Activated CD4-positive, alpha-beta T cell treated with anti-CD3 and anti-CD28 coated beads, Interleukin-2, amount 10 ng/mL, durations not matched to agents 24 days and 14 days (primary cell): ENCODE measurements at regions of chr2 and their contacts with region 1.

Region 1: DNA sequence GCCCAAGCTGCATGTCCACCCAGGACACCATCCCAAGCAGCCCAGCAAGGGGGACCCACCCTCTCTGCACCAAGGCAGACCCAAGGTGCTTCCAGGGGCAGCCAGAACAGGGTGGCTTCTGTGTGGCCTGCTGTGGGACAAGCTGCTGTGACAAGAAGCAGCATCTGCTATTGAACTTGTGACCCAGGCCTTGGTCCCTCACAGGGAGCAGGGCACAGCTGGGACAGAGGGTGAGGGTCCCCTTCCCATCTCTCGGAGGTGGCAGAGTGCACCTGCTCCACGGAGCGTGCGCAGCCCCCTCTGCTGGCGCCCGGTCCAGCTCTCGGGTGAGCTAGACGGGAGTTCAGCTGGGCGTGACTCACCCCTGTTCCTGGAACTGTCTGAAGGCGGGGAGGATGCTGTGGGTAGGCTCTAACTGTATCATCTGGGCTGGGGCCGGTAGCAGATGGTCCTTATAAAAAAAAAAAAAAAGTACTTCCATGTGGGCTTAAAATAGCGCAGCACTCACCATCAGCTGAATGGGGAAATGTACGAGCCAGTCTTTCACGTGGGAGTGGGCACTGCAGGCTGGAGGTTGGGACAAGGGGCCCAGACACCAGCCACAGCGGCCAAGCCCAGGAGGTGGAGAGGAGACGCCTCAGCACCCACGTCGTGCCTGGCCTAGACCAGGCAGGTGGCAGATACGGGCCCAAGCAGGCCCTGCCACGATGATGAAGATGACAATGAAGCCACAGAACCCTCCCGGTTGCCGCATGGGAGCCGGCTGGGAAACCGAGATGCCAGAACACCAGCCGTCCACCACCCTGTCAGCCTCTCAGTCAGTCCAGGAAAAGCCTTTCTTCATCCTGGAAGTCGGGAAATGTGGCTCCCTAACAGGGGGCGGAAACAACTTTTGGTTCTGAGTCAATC is 136.8 kb upstream of the ID2 start:
- DNase-seq: peak; percentile 95
- H3K4me3 Mint-ChIP-seq: peak overlapping the region; percentile 64
- H3K27ac Mint-ChIP-seq: peak overlapping the region; percentile 99
- H3K4me1 Mint-ChIP-seq: peaks cover 80% of the 10 kb centered on the region
- H3K27me3 Mint-ChIP-seq: no peaks in the 10 kb centered on the region

Region 2: GRCh38 chr2:7523481-7524120 is 1021.4 kb before region 1 on chr2:
- intact Hi-C with region 1: loop called (anchors 5 kb)
- DNase-seq: no peak
- H3K4me3 Mint-ChIP-seq: peak overlapping the region; percentile 63
- H3K27ac Mint-ChIP-seq: peak overlapping the region; percentile 98
- H3K4me1 Mint-ChIP-seq: peaks cover 53% of the 10 kb centered on the region
- H3K27me3 Mint-ChIP-seq: no peaks in the 10 kb centered on the region

Region 3: DNA sequence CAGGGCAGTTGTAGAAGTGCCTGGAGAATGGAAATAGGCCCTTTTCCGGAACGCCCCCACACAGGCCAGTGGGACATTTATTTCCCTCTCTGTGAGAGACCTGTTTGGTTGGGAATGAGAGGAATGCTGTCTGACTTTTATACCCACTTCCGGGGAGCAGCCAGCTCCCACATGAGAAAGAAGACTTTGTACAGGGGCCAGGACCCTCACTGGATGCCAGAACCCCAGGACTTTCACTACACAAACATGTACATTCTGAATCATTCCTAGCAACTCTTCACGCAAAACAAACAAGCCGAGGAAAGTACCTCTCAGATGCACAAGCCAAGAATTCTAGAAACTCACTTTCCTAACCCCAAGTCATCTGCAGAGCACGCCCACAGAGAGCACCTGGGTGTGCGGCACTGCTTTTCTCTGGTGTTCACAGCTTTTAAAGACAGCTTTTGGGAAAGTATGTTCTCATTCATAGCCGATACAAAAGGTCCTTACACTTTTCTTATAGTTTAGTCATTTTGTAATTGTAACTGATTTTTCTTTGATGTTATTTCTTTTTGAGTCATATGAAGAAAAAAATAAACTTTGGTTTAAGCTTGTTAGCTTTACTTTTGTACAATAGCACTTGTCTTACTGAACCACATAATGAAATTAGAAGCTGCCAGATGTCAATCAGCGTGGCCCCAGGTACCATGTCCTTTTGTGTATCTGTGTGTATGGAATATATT is 719.3 kb before region 1 on chr2:
- intact Hi-C with region 1: loop called (anchors 1 kb)
- DNase-seq: peak; percentile 83
- H3K4me3 Mint-ChIP-seq: peak overlapping the region; percentile 47
- H3K27ac Mint-ChIP-seq: peak overlapping the region; percentile 96
- H3K4me1 Mint-ChIP-seq: peaks cover 28% of the 10 kb centered on the region
- H3K27me3 Mint-ChIP-seq: no peaks in the 10 kb centered on the region

Region 4: DNA sequence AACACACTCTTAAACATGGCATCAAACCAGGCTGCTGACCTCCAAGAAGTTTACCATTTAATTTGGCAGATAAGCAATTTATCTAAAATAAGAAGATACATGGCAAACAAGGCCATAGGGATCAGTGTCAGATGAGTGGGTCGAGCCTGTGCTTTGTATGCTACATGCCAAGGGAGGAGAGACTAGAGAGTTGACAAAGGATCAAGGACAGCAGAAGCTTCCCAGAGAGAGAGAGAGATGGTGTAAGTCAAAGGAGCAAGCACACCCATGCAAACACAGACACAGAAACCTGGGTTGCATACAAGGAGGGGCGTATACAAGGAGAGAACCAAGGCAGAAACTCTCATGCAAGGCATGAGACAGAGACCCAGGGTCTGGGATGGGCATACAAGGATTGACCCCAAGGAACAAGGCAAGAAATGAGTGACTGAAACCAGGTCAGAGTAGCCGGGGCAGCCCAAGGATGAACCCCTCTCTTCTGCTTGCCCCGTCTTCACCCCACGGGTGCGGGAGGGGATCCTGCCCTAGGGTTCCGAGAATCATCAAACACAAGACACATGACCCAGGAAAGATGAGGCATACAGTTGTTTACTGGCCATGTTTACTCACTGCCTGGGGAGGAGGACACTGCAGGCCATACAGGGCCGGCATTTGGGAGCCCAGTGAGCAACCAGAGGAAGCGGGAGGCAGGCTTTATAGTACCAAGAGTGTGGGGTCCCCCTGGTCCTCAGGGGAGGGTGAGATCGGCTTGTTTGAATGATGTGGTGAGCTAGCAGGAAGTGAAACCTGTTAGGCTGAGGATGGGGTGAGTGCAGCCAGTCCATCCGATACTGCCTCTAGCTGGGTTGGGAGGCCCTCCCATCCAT is 392.4 kb before region 1 on chr2:
- intact Hi-C with region 1: loop called (anchors 1 kb)
- DNase-seq: peak; percentile 49
- H3K4me3 Mint-ChIP-seq: no peak overlapping the region
- H3K27ac Mint-ChIP-seq: peak overlapping the region; percentile 12
- H3K4me1 Mint-ChIP-seq: peaks cover 26% of the 10 kb centered on the region
- H3K27me3 Mint-ChIP-seq: no peaks in the 10 kb centered on the region

Region 5: DNA sequence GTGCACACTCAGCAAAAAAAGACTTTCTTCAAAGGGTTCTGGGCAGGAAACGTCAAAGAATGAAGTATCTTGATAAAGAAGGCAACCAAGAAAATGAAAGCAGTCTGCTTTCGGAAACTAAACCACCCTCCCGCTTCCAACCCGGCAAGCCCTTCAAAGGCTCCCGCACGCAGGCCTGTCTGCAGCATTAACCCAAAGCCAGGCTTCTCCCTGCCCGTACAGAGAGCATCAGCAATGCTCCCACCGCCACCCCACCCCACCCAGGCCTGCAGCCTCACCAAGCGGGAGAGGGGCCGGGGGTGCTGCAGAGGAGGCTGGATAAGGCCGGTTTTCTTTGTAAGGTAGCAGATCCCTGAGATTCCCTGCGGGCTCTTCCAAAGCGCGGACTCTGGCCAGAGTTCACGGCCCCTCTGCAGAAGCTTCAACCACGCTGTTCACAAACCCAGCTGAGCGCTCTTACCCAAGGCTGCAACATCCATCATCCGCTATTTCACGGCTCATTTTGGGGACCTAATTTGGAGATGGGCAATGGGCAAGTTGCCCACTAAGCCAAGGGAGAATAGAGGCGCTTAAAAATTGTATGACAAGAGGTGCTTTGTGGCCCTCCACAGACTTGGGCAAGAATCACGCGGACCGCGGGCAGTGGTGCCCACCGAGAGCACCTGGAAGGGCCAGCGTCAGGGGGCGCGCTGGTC is 88.7 kb before region 1 on chr2:
- intact Hi-C with region 1: loop called (anchors 1 kb)
- DNase-seq: peak; percentile 90
- H3K4me3 Mint-ChIP-seq: peak overlapping the region; percentile 79
- H3K27ac Mint-ChIP-seq: peak overlapping the region; percentile 91
- H3K4me1 Mint-ChIP-seq: peaks cover 50% of the 10 kb centered on the region
- H3K27me3 Mint-ChIP-seq: peaks cover 10% of the 10 kb centered on the region

Region 6: GRCh38 chr2:8586457-8587051 is 41.5 kb after region 1 on chr2:
- intact Hi-C with region 1: loop called (anchors 1 kb)
- DNase-seq: no peak
- H3K4me3 Mint-ChIP-seq: peak overlapping the region; percentile 17
- H3K27ac Mint-ChIP-seq: peak overlapping the region; percentile 58
- H3K4me1 Mint-ChIP-seq: peaks cover 36% of the 10 kb centered on the region
- H3K27me3 Mint-ChIP-seq: peaks cover 15% of the 10 kb centered on the region